A673 (cell line): ENCODE measurements at regions of chr9 and their contacts with region 1.

Region 1: GRCh38 chr9:21324047-21324446 is 11.2 kb downstream of the KLHL9 start:
- DNase-seq: no peak
- H3K4me3 ChIP-seq: no peak overlapping the region
- H3K27ac ChIP-seq: no peak overlapping the region
- H3K4me1 ChIP-seq: no peaks in the 10 kb centered on the region
- H3K27me3 ChIP-seq: no peaks in the 10 kb centered on the region
- CTCF ChIP-seq: no peak

Region 2: GRCh38 chr9:21402386-21403251 is 78.6 kb after region 1 on chr9:
- CTCF ChIA-PET with region 1: interaction called, 3 read pairs
- POLR2A ChIA-PET with region 1: no interaction called
- intact Hi-C with region 1: loop called (anchors 5 kb)
- DNase-seq: no peak
- H3K4me3 ChIP-seq: no peak overlapping the region
- H3K27ac ChIP-seq: no peak overlapping the region
- H3K4me1 ChIP-seq: no peaks in the 10 kb centered on the region
- H3K27me3 ChIP-seq: peaks cover 58% of the 10 kb centered on the region
- CTCF ChIP-seq: no peak

Region 3: DNA sequence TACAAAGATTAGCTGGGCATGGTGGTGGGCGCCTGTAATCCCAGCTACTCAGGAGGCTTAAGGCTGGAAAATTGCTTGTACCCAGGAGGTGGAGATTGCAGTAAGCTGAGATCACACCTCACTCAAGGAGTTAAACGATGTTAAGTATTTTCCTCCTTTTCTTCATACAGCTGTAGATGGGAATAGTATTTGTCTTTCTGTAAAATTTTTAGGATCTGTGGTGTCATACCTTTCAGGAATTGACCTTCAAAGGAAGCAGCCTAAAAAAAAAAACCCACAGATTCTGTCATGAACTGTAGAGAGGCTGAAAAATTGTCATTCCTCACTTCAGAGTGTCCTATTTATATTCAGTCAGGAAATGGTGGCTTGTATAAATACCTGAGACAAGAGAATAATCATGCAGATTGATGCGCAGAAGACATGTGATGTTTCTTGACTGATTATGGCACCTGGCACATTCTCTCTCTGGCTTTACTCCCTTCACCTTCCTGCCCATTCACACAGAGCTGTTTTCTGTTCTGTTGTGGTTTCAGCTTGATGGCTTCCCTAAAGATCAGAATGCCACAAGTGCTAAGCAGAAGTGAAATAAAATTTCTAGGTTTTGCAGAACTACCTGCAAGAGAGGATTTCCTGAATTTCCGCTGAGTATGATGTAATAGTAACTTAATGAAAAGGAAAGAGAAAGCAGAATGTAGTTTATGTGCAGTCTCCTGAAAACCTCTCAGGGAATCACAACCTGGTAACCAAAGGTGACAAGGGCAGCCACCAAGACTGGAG is 120.0 kb after region 1 on chr9:
- CTCF ChIA-PET with region 1: no interaction called
- POLR2A ChIA-PET with region 1: no interaction called
- intact Hi-C with region 1: no loop called
- DNase-seq: no peak
- H3K4me3 ChIP-seq: no peak overlapping the region
- H3K27ac ChIP-seq: no peak overlapping the region
- H3K4me1 ChIP-seq: no peaks in the 10 kb centered on the region
- H3K27me3 ChIP-seq: no peaks in the 10 kb centered on the region
- CTCF ChIP-seq: no peak